ENCODE measurements at regions of chr4 and their contacts with region 1.

Region 1: DNA sequence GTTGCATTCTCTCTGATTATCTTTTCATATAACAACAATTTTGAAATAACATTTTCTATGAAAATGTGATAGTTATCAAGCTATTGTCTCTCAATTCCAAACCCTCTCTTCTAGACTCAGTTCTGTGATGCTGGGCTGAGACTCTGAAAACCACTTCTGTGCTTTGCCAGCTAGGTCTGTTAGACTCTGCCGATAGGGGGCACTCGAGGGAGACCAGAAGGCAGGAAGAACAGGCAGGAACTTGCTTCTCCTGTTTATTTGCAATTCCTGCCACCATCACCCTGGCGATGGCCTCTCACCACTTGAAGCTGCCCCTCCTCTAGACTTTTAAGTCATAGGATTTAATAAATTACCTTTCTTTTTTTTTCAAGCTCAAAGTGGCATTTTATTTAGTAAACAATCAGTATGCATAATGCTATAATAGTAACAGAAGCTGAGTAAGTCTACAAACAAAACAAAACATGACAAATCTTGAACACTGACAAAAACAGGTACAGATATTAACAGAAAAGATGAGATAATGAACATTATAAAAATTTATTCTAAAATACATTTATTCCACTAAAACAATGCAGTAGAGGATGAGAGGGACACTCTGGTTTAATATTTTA is 49.7 kb downstream of the RASL11B start:
- DNase-seq: peak; percentile 15 to 64 (median 48)
- ATAC-seq: peak; percentile 56
- H3K4me3 ChIP-seq: no peak overlapping the region
- H3K4me3 Mint-ChIP-seq: no peak overlapping the region
- H3K27ac ChIP-seq: no peak overlapping the region
- H3K27ac Mint-ChIP-seq: no peak overlapping the region
- H3K4me1 ChIP-seq: peaks cover 0 to 5% of the 10 kb centered on the region in 2 donors
- H3K4me1 Mint-ChIP-seq: peaks cover 0 to 15% (median 6%) of the 10 kb centered on the region in 7 donors
- H3K27me3 ChIP-seq: no peaks in the 10 kb centered on the region
- H3K27me3 Mint-ChIP-seq: no peaks in the 10 kb centered on the region

Region 2: DNA sequence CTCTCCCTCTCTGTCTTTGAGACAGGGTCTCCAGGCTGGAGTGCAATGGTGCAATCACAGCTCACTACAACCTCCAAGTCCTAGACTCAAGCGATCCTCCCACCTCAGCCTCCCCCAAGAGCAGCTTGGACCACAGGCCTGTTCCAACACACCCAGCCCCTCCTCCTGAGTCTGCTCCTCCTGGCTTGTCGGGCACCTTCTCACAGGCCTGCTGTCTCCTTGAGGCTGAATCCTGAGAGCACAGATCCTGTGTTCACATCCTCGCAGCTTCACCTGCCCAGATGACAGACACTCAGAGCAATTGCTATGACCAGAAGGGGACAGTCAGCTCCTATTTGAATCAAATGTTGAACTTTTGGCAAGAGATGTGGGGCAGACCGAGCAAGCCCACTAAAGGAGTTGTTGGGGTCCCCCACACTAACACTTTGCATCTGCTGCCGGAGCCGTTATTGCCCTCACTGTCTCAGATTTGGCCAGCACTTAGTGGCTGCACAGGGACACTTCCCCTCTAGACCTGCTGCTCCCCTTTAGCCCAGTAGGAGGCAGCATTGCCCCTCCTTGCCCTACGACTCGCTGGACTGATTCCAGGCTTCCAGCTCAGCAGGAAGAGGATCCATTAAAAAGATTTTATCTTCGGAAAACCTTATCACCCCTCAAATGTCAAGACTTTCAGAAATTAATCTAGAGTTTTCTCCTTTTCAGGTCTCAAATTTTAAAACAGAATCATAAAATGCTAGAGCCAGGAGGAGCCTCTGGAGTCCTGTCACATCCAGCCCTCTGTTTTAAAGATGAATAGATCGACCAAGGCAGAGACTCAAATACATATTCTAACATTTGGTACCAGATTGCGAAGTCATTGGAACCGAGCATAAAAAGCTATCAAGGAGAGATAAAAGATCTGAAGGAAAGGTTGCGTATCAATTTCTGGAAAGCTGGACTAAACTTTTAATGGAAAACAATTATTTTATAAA is 366.4 kb before region 1 on chr4:
- CTCF ChIA-PET with region 1: no interaction called
- POLR2A ChIA-PET with region 1: no interaction called
- intact Hi-C with region 1: loop called in 1 of 2 experiments (anchors 10 kb)
- DNase-seq: peak; percentile 2 to 63 (median 26)
- ATAC-seq: peak; percentile 75
- H3K4me3 ChIP-seq: no peak overlapping the region
- H3K4me3 Mint-ChIP-seq: no peak overlapping the region
- H3K27ac ChIP-seq: no peak overlapping the region
- H3K27ac Mint-ChIP-seq: no peak overlapping the region
- H3K4me1 ChIP-seq: no peaks in the 10 kb centered on the region
- H3K4me1 Mint-ChIP-seq: no peaks in the 10 kb centered on the region
- H3K27me3 ChIP-seq: no peaks in the 10 kb centered on the region
- H3K27me3 Mint-ChIP-seq: peaks cover 5 to 24% (median 6%) of the 10 kb centered on the region in 5 donors

Region 3: DNA sequence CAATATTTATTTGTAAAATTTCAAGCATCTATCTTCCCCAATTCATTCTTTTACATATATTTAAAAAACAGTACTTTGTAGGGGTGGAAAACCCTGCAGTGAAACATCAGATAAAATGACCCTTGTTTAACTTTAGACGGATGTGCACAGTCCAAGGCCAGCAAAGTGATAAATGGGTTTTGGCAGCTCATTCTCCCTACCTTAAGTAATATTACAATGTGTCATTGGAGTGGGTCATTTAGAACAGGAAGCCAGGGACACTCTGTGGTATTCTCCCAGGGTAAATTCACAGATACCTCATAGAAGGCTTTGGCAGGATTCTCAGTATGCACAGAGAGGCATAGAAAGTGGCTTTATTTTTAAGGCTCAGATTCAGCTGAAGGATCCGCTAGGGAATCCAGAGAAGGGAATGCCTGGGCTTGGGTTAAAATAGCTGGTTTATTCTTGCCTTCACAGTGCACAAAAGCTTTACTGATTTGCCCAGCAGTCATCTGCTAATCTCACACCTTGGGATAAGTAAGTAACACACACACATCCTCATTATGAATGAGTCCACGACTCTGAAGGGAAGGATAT is 157.1 kb after region 1 on chr4:
- CTCF ChIA-PET with region 1: no interaction called
- POLR2A ChIA-PET with region 1: no interaction called
- intact Hi-C with region 1: no loop called
- DNase-seq: no peak
- ATAC-seq: no peak
- H3K4me3 ChIP-seq: no peak overlapping the region
- H3K4me3 Mint-ChIP-seq: no peak overlapping the region
- H3K27ac ChIP-seq: no peak overlapping the region
- H3K27ac Mint-ChIP-seq: no peak overlapping the region
- H3K4me1 ChIP-seq: no peaks in the 10 kb centered on the region
- H3K4me1 Mint-ChIP-seq: peaks cover 0 to 2% (median 0%) of the 10 kb centered on the region in 7 donors
- H3K27me3 ChIP-seq: no peaks in the 10 kb centered on the region
- H3K27me3 Mint-ChIP-seq: no peaks in the 10 kb centered on the region

Region 4: DNA sequence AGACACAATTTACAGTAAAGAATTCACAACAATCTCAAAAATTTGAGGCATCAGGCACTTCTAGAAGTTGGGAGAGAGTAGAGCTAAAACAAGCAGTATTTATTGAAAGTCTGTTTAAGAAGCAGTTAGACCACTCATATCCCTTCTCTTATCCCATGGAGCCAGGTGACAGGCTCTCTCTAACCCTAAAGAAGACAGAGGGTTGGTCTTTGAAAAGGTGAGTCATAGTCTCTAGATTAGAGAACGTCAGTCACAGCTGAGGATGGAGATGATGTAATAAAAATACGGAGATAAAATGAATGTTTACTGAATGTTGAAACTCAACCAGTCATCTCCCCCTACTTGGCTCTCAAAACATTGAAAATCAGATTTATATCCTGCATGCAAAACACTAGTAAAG is 928.9 kb after region 1 on chr4:
- CTCF ChIA-PET with region 1: no interaction called
- POLR2A ChIA-PET with region 1: no interaction called
- intact Hi-C with region 1: no loop called
- DNase-seq: no peak
- ATAC-seq: no peak
- H3K4me3 ChIP-seq: no peak overlapping the region
- H3K4me3 Mint-ChIP-seq: no peak overlapping the region
- H3K27ac ChIP-seq: no peak overlapping the region
- H3K27ac Mint-ChIP-seq: no peak overlapping the region
- H3K4me1 ChIP-seq: no peaks in the 10 kb centered on the region
- H3K4me1 Mint-ChIP-seq: no peaks in the 10 kb centered on the region
- H3K27me3 ChIP-seq: no peaks in the 10 kb centered on the region
- H3K27me3 Mint-ChIP-seq: peaks cover 0 to 22% (median 13%) of the 10 kb centered on the region in 5 donors

Measured in naive thymus-derived CD4-positive, alpha-beta T cell (primary cell).